Left colon (tissue), 2 donors: ENCODE measurements at regions of chr1 and their contacts with region 1.

Region 1: GRCh38 chr1:56584910-56585528 is 5.7 kb upstream of the PLPP3 start:
- DNase-seq: no peak
- ATAC-seq: peak; percentile 70

Region 2: GRCh38 chr1:55131801-55132200 is 1453.2 kb before region 1 on chr1:
- intact Hi-C with region 1: loop called in 1 of 2 experiments (anchors 10 kb)
- DNase-seq: no peak
- ATAC-seq: no peak

Region 3: DNA sequence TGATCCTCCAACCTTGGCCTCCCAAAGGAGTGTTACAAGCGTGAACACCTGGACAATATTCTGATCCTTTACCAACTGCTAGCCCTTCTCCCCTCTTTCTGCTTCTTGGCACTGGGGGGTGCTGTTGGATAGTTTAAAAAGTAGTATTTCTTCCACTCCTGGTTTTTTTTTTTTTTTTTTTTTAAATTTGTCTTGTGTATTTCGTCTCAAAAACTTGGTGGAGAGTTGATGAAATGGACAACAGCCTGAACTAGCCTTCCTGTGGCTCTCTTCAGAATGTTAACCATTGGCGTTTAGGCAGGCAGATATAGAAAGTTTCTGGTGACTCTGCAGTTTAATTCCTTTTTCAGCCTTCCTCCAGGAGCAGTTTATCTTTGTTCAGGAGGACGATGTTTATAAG is 1300.2 kb before region 1 on chr1:
- intact Hi-C with region 1: loop called in 1 of 2 experiments (anchors 2 kb)
- DNase-seq: peak in 1 of 2 donors; percentile 34
- ATAC-seq: peak; percentile 66

Region 4: DNA sequence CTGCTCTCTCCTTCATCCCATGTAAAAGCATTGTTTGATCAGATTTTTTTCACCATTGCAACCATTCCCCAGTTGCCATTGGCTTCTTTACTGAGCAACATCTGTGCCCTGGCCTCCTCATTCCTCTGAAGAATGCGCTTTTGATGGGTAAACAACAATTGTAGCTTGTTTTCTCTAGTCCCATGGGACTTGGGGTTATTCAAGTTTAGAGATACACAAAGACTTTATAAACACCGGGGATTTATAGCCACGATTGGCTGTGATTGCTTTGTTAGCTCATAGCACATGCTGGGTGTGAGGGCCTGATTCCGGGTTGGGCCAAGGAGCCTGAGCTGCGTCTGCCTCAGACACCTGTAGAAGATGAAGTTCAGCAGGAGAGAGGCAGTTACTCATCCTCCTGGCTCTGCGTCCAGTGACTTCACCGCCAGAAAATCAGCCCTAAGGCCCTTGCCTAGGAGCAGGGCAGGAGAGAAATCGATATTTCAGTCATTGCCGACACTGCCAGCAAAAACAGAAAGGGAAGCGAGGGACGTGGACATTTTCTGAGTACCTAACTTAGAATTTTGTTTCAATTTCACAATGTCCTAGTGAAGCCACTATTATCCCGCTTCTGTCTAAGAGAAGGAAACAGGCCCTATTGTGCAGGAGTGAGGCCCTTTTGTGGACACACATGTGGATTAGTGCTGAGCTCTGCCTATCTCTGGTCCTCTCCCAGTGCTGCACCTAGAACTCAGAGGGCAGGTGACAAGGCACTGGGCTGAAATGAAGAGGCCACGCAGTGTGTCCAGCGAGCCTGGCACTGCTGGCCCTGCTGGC is 1210.0 kb before region 1 on chr1:
- intact Hi-C with region 1: loop called in 1 of 2 experiments (anchors 5 kb)
- DNase-seq: peak in 1 of 2 donors; percentile 36
- ATAC-seq: no peak